Activated CD4-positive, alpha-beta T cell treated with anti-CD3 and anti-CD28 coated beads for 36 hours (primary cell): ENCODE measurements at regions of chr19 and their contacts with region 1.

Region 1: GRCh38 chr19:42108527-42109389 is 23.5 kb downstream of the POU2F2 start:
- DNase-seq: peak; percentile 95
- ATAC-seq: peak; percentile 95
- H3K4me3 Mint-ChIP-seq: no peak overlapping the region
- H3K27ac Mint-ChIP-seq: no peak overlapping the region
- H3K4me1 Mint-ChIP-seq: peaks cover 48% of the 10 kb centered on the region
- H3K27me3 Mint-ChIP-seq: no peaks in the 10 kb centered on the region

Region 2: DNA sequence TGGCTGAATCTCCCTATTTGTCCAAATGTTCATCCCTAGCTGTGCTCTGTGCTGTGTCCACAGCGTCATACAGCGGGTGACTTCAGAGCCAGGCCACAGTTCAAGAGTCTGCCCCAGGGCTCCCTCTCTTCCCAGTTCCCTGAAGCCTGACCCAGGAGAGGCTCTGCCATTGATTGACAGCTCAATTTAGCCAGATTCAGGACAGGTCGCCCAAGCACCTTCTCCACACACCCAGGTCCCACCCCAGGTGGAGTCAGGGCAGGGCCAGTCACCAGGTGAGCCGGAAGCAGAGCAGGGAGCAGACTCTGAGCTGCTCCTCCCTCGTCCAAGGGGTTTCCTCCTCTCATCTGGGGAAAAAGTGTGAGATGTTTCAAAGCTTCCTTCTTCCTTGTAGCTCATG is 426.4 kb before region 1 on chr19:
- CTCF ChIA-PET with region 1: no interaction called
- POLR2A ChIA-PET with region 1: no interaction called
- intact Hi-C with region 1: no loop called
- DNase-seq: no peak
- ATAC-seq: no peak
- H3K4me3 Mint-ChIP-seq: no peak overlapping the region
- H3K27ac Mint-ChIP-seq: no peak overlapping the region
- H3K4me1 Mint-ChIP-seq: no peaks in the 10 kb centered on the region
- H3K27me3 Mint-ChIP-seq: peaks cover 25% of the 10 kb centered on the region

Region 3: GRCh38 chr19:42121656-42122069 is 12.9 kb after region 1 on chr19:
- CTCF ChIA-PET with region 1: interaction called, 25 read pairs
- POLR2A ChIA-PET with region 1: no interaction called
- intact Hi-C with region 1: loop called (anchors 1 kb)
- DNase-seq: peak; percentile 93
- ATAC-seq: peak; percentile 81
- H3K4me3 Mint-ChIP-seq: peak overlapping the region; percentile 80
- H3K27ac Mint-ChIP-seq: peak overlapping the region; percentile 94
- H3K4me1 Mint-ChIP-seq: peaks cover 57% of the 10 kb centered on the region
- H3K27me3 Mint-ChIP-seq: no peaks in the 10 kb centered on the region

Region 4: GRCh38 chr19:42184401-42184861 is 75.7 kb after region 1 on chr19:
- CTCF ChIA-PET with region 1: interaction called, 37 read pairs
- POLR2A ChIA-PET with region 1: no interaction called
- intact Hi-C with region 1: loop called (anchors 1 kb)
- DNase-seq: peak; percentile 86
- ATAC-seq: peak; percentile 82
- H3K4me3 Mint-ChIP-seq: no peak overlapping the region
- H3K27ac Mint-ChIP-seq: peak overlapping the region; percentile 6
- H3K4me1 Mint-ChIP-seq: peaks cover 31% of the 10 kb centered on the region
- H3K27me3 Mint-ChIP-seq: peaks cover 4% of the 10 kb centered on the region

Region 5: DNA sequence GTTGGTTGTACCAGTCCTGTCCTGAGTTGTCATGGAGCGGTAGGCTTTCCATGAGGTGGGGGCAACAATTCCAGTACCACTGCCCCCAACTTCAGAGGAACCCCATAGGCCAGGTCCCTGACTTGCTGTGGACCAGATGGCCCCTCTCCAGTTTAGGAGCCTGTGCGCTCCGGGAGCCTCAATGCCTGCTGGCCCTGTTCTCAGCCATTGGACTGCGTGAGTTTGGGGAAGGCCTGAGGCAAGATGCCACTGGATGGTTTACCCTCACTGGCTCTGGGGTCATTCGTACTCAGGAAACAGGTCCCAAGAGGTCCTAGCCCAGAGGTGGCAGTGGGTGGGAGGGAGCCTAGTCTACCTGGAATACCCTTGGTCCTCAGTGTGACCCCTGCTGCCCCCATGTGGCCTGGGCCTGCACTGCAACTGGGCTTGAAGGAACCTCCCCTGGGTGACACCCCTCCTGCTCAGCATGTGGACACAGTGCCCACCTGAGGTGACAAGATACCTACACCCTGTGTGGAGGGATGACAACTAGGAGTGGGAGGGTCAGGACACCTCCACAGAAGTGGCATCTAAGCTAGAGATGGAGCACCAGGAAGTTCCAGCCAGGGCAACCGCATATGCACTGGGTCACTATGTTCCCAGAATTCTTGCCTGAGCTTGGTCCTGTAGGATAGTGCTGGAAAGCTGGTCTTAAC is 187.2 kb after region 1 on chr19:
- CTCF ChIA-PET with region 1: interaction called, 11 read pairs
- POLR2A ChIA-PET with region 1: no interaction called
- intact Hi-C with region 1: loop called in 1 of 2 experiments (anchors 2 kb)
- DNase-seq: peak; percentile 92
- ATAC-seq: peak; percentile 87
- H3K4me3 Mint-ChIP-seq: no peak overlapping the region
- H3K27ac Mint-ChIP-seq: no peak overlapping the region
- H3K4me1 Mint-ChIP-seq: no peaks in the 10 kb centered on the region
- H3K27me3 Mint-ChIP-seq: no peaks in the 10 kb centered on the region

Region 6: DNA sequence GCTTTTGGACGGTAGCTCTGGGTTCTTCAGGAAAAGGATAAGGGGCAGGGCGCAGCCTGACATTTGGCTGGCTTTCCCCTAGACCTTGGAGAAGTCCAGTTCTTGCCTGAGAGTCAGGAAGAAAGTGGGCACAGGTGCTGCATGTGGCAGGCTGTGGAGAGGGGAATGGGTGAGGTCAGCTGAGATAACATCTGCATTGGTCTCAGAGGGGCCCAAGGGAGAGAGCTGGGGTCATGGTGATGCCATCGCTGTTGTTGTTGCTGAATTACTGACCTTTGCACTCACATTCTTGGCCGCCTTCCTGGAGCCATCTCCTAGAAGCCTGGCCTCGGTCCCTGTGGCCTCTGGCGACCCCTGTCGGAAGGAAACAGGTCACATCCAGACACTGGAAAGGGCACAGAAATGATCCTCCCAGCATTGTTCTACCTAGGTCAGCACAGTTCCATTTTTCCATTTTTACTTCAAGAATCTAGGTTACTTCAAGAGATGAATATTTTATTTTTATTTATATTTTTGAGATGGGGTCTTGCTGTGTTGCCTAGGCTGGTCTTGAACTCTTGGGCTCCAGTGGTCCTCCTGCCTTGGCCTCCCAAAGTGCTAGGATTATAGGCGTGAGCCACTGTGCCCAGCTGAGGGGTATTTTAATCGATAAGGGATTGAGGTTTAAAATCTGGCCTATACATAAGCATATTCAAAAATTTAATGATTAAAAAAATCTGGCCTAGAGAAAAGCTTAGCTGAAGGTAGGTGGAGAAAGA is 324.9 kb after region 1 on chr19:
- CTCF ChIA-PET with region 1: interaction called, 3 read pairs
- POLR2A ChIA-PET with region 1: no interaction called
- intact Hi-C with region 1: loop called in 1 of 2 experiments (anchors 1 kb)
- DNase-seq: peak; percentile 84
- ATAC-seq: peak; percentile 79
- H3K4me3 Mint-ChIP-seq: no peak overlapping the region
- H3K27ac Mint-ChIP-seq: no peak overlapping the region
- H3K4me1 Mint-ChIP-seq: peaks cover 5% of the 10 kb centered on the region
- H3K27me3 Mint-ChIP-seq: no peaks in the 10 kb centered on the region